Dorsolateral prefrontal cortex (tissue), 120 donors: ENCODE measurements at regions of chr17 and their contacts with region 1.

Region 1: GRCh38 chr17:79707931-79708891 is 22.5 kb upstream of the ENPP7 start:
- DNase-seq: peak in 8 of 10 donors; percentile 53 to 77 (median 64)
- H3K4me3 ChIP-seq: peak overlapping the region in 48 of 59 donors; percentile 5 to 61 (median 41)
- H3K27ac ChIP-seq: peak overlapping the region in 1 of 59 donors; percentile 53
- H3K27me3 ChIP-seq: peaks cover 0 to 7% (median 0%) of the 10 kb centered on the region in 45 donors
- CTCF ChIP-seq: peak; percentile 64 to 89 (median 81)

Region 2: DNA sequence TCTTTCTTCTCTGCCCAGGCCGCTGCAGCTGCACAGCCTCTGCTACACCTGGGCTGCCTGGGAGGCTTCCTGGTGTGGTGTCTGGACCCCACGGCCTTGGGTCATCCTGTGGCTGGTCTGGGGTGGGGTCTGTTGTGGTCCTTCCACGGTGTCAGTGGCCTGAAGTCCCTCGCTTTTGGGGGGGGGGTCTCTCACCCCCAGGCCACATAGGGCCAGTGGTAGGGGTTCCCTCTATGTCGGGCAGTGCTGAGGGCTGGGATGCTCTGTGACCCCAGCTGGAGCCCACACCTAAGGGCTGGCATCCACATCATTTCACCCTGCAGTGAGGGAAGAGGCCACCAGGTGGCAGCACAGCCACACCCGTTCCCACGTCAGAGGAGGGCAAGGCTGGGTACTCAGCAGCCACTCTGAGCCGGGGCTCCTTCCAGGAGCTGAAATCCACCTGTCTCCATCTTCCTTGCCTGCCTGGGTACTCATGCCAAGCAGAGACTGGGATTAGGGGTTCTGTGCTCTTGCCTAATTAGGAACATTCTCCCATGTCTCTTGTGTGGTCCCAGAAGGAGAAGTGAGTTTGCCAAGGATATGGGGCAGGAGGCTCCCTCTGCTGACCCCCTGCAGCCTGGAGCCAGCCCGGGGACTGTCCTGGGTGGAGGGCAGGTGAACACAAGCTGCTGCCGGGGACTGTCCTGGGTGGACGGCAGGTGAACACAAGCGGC is 620.6 kb before region 1 on chr17:
- intact Hi-C with region 1: loop called in 1 of 2 experiments (anchors 1 kb)
- DNase-seq: peak; percentile 68 to 91 (median 80)
- H3K4me3 ChIP-seq: peak overlapping the region in 1 of 59 donors; percentile 3
- H3K27ac ChIP-seq: peak overlapping the region in 13 of 59 donors; percentile 14 to 72 (median 40)
- H3K27me3 ChIP-seq: peaks cover 0 to 7% (median 0%) of the 10 kb centered on the region in 45 donors
- CTCF ChIP-seq: peak; percentile 63 to 97 (median 92)